Endothelial cell of umbilical vein (primary cell): ENCODE measurements at regions of chr3 and their contacts with region 1.

Region 1: GRCh38 chr3:192577271-192577670 is 150.1 kb downstream of the FGF12 start:
- DNase-seq: no peak
- H3K4me3 ChIP-seq: no peak overlapping the region
- H3K27ac ChIP-seq: no peak overlapping the region
- H3K4me1 ChIP-seq: no peaks in the 10 kb centered on the region
- H3K27me3 ChIP-seq: peaks cover 0 to 3% of the 10 kb centered on the region in 2 experiments
- CTCF ChIP-seq: no peak
- POLR2A ChIP-seq: no peak

Region 2: DNA sequence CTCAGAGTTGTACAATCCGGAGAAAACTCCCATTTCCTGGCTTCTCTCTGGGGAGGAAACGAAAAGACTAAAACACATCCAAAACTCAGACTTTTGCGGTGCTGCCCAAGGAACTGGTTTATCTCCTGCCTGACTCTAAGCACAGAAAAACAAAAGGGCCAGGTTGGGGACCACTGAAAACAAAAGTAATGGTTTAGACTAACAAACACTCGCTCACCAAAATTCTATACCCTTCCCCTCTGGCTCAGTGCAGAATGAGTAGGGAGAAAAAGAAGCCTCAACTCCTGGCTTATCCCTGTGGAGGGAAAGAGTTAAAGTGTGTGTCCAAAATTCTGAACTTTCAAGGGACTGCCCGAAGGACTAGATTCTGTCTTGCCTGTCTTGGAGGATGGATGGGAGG is 23.6 kb before region 1 on chr3:
- CTCF ChIA-PET with region 1: no interaction called
- POLR2A ChIA-PET with region 1: no interaction called
- dilution Hi-C with region 1: no loop called
- intact Hi-C with region 1: loop called (anchors 1 kb)
- DNase-seq: no peak
- H3K4me3 ChIP-seq: no peak overlapping the region
- H3K27ac ChIP-seq: no peak overlapping the region
- H3K4me1 ChIP-seq: no peaks in the 10 kb centered on the region
- H3K27me3 ChIP-seq: peaks cover 0 to 5% of the 10 kb centered on the region in 2 experiments
- CTCF ChIP-seq: no peak
- POLR2A ChIP-seq: no peak